Vagina (tissue), 2 donors: ENCODE measurements at regions of chr11 and their contacts with region 1.

Region 1: GRCh38 chr11:64887757-64888405 is 9.5 kb upstream of the EHD1 start:
- DNase-seq: no peak
- H3K4me3 ChIP-seq: peak overlapping the region; percentile 15 to 35
- H3K27ac ChIP-seq: peak overlapping the region; percentile 22
- H3K4me1 ChIP-seq: peaks cover 10% of the 10 kb centered on the region
- H3K27me3 ChIP-seq: no peaks in the 10 kb centered on the region
- CTCF ChIP-seq: peak; percentile 89 to 99 (median 90)
- POLR2A ChIP-seq: no peak

Region 2: DNA sequence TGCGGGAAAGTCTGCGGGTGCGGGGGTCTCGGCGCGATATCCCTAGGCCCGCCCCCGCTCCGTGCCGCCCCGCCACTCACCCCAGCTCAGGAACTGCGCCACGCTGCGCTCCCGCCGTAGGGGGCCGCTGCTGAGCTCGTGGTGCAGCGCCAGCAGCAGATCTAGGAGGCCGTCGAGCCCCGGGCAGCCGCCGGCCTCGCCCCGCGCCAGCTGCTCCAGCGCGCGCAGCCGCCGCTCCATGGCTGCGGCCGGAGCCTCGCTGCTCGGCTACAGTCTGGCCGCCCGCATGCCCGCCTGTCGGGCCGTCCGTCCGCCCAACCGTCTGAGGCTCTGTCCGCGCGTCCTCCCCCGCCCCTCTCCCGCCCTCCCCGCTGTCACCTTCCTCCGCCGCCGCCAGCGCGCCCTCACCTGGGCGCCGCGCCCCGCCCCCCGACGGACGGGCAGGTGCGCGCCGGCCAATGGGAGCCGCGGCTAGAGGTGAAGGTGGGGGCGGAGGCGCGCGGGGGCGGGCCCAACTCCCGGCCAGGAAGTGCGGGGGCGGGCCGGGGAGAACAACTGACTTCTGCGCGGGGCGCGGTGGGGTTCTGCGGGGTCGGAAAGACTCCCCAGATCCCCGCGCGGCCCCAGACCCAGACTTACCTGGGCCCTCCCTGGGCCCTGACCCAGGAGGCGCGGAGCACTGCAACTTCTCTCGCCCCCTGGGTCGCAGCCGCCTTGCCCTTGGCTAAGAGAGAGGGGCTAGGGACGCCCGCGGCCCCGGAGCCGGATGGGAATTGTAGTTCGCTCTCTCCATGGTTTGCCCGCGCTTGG is 43.3 kb before region 1 on chr11 and contains the start of gene CDC42BPG:
- intact Hi-C with region 1: loop called (anchors 2 kb)
- DNase-seq: no peak
- H3K4me3 ChIP-seq: peak within 1 kb of the TSS; percentile 50 to 56
- H3K27ac ChIP-seq: peak within 1 kb of the TSS; percentile 78
- H3K4me1 ChIP-seq: peaks cover 33% of the 10 kb centered on the region
- H3K27me3 ChIP-seq: no peaks in the 10 kb centered on the region
- CTCF ChIP-seq: peak in 1 of 3 experiments; percentile 13
- POLR2A ChIP-seq: no peak
- total RNA-seq, gene CDC42BPG: 13.0 TPM